OCI-LY7 (cell line): ENCODE measurements at regions of chr19 and their contacts with region 1.

Region 1: GRCh38 chr19:14890643-14891379 is 4.9 kb upstream of the OR7A17 start:
- DNase-seq: no peak
- H3K4me3 ChIP-seq: no peak overlapping the region
- H3K27ac ChIP-seq: no peak overlapping the region
- H3K4me1 ChIP-seq: no peaks in the 10 kb centered on the region
- CTCF ChIP-seq: no peak

Region 2: DNA sequence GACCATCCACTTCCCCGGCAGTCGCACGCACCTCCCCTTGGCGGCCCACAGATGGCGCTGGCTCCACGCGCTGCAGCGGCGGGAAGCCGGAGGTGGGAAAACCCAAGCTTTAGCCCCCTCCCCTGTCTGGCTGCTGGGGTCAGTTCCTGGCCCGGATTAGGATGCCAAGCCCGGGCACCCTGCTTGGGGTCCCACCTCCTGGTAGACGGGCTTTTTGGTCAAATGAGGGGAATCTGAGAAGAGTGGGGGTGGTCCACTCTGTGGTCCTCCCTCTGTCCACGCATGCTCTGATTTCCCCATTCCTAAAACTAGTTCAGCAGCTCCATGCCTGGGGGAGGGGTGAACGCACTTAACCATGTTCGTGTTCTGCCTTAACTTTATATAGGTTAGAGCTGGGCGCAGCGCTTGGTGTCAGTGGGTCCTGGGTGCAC is 104.4 kb before region 1 on chr19:
- CTCF ChIA-PET with region 1: no interaction called
- POLR2A ChIA-PET with region 1: no interaction called
- intact Hi-C with region 1: loop called (anchors 2 kb)
- DNase-seq: peak; percentile 34
- H3K4me3 ChIP-seq: no peak overlapping the region
- H3K27ac ChIP-seq: no peak overlapping the region
- H3K4me1 ChIP-seq: peaks cover 4% of the 10 kb centered on the region
- CTCF ChIP-seq: peak; percentile 91

Region 3: DNA sequence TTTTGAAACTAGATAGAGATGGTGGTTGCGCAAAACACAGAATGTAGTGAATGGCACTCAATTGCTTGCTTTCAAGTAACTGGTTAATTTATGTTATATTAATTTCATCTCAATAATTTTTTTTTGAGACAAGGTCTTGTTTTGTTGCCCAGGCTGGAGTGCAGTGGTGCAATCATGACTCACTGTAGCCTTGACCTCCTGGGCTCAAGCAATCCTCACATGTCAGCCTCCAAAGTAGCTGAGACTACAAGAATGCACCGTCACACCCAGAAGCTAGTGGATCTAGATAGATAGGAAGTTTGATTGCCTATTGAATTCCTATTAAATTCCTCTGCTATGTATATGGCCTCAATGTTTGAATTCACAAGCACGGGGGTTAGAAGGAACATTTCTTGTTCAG is 86.0 kb before region 1 on chr19:
- CTCF ChIA-PET with region 1: no interaction called
- POLR2A ChIA-PET with region 1: no interaction called
- intact Hi-C with region 1: no loop called
- DNase-seq: no peak
- H3K4me3 ChIP-seq: no peak overlapping the region
- H3K27ac ChIP-seq: no peak overlapping the region
- H3K4me1 ChIP-seq: no peaks in the 10 kb centered on the region
- CTCF ChIP-seq: no peak